Activated T-helper 2 cell treated with anti-CD3 and anti-CD28 coated beads, Interferon-gamma antibody, Interleukin-2, Interleukin-4, amounts not matched to agents 10 μg/mL and 5 μg/mL and 100 μg/mL, durations not matched to agents 14 hours and 24 hours and 36 hours (primary cell): ENCODE measurements at regions of chr17 and their contacts with region 1.

Region 1: GRCh38 chr17:75271233-75271954 is 363 bp upstream of the MIF4GD start:
- DNase-seq: peak; percentile 87
- H3K4me3 Mint-ChIP-seq: peak overlapping the region; percentile 88
- H3K27ac Mint-ChIP-seq: peak overlapping the region; percentile 74
- H3K4me1 Mint-ChIP-seq: peaks cover 33% of the 10 kb centered on the region
- H3K27me3 Mint-ChIP-seq: no peaks in the 10 kb centered on the region

Region 2: GRCh38 chr17:75412455-75413317 is 141.3 kb after region 1 on chr17:
- intact Hi-C with region 1: loop called (anchors 1 kb)
- DNase-seq: peak; percentile 73
- H3K4me3 Mint-ChIP-seq: peak overlapping the region; percentile 53
- H3K27ac Mint-ChIP-seq: no peak overlapping the region
- H3K4me1 Mint-ChIP-seq: peaks cover 26% of the 10 kb centered on the region
- H3K27me3 Mint-ChIP-seq: peaks cover 19% of the 10 kb centered on the region

Region 3: DNA sequence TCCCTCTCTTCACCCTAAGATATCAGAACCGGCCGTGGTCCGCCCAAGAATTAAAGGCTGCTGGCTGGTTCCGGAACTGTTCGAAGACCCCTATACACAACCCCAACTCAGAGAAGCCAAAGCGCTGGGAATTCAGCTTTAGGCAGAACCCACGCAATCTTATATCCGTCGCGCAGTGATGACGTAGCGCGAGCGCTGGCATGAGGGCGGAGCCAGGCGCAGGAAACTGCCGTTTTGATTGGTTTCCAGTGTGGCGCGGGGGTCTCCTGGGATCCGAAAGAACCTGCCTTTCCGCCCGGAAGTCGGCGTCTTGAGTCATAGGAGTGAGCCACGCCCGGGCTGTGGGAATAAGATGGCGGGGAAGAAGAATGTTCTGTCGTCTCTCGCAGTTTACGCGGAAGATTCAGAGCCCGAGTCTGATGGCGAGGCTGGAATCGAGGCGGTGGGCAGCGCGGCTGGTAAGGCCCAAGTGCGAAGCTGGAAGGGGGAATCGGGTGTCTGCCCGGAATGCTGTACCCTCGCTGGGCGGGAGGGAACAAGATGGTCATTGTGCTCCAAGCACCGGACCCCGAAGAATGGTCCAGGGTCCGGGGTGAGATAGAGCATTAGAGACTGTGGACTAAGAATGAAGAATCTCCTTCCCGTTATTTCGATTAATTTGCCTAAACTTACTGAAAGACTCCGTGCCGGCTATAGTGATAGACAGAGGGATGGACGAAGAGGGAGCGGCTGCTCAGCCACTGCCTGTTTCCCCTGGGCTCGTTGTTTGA is 395.8 kb after region 1 on chr17 and contains the starts of genes RECQL5 and SAP30BP:
- intact Hi-C with region 1: loop called (anchors 10 kb)
- DNase-seq: peak; percentile 98
- H3K4me3 Mint-ChIP-seq: peak within 1 kb of the TSS; percentile 73
- H3K27ac Mint-ChIP-seq: peak within 1 kb of the TSS; percentile 38
- H3K4me1 Mint-ChIP-seq: peaks cover 20% of the 10 kb centered on the region
- H3K27me3 Mint-ChIP-seq: no peaks in the 10 kb centered on the region
- total RNA-seq, gene RECQL5: 30.8 and 33.3 TPM in 2 replicates
- total RNA-seq, gene SAP30BP: 97.6 and 101 TPM in 2 replicates